GM13977 (cell line): ENCODE measurements at regions of chr11 and their contacts with region 1.

Region 1: GRCh38 chr11:719214-720016 is 13.4 kb downstream of the EPS8L2 start:
- DNase-seq: no peak
- CTCF ChIP-seq: no peak

Region 2: DNA sequence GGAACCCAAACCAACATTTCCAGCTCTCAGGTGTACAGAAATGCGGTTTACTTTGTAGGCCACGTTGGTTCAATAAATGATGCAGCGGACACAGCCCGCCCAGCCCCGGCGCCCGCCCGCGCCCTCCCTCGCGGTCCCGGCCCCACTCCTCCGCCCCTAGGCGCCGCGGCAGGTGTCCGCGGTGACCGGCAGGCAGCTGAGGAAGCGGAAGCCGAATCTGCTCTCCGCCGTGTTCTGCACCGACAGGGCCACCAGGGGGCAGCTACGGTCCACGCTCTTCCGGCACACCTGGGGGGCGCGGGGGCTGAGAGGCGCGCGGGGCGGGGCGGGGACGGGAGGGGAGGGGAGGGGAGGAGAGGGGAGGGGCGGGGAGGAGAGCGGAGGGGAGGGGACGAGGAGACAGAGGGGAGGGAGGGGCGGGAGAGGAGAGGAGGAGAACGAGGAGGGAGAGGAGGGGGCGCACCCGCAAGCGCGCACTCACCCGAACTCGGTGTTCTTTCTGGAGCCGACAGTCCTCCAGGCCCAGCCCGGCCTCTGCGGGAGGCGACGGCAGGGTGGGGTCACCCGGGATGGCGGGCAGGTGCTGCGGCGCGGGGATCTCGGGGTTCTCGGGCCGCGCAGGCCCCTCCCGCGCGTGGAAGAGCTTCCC is 164.5 kb before region 1 on chr11:
- in situ Hi-C with region 1: loop called (anchors 10 kb)
- DNase-seq: peak; percentile 94
- CTCF ChIP-seq: peak; percentile 94

Region 3: DNA sequence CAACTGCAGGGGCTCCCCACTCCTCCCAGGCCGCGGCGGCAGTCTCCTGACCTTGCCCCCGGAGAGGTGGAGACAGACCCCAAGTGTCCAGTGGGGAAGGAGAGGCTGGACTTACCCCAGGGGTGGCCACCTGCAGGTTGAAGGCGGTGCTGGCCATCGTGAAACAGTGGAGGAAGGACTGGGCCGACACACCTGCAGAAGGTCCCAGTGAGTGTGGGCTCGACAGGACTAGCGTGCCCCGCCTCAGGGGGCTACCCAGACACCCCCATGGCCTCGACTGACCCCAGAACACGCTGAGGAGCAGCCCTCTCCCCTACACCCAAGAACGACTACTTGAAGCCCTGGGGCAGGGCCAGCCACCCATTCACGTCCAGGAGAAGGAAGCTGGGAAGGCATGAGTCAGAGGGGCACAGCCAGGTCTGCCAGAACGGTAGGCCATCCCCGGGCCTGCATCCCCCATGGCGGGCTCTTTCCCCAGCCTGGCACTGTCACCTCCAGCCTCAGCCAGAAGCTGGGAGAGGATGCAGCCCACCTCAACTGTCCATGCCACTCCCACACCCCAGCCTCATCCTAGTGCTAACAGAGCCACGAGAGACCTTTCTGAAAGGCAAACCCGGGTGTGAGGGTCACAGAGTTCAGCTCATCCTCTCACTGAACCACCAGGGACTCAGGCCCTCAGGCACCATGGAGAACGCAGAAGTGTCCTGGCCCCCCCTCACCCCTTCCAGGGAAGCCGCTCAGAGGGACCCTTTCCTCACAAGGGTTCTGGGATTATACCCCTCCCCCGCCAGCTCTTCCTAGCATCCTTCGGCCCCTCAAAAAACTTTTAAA is 55.8 kb after region 1 on chr11:
- in situ Hi-C with region 1: no loop called
- DNase-seq: no peak
- CTCF ChIP-seq: no peak

Region 4: DNA sequence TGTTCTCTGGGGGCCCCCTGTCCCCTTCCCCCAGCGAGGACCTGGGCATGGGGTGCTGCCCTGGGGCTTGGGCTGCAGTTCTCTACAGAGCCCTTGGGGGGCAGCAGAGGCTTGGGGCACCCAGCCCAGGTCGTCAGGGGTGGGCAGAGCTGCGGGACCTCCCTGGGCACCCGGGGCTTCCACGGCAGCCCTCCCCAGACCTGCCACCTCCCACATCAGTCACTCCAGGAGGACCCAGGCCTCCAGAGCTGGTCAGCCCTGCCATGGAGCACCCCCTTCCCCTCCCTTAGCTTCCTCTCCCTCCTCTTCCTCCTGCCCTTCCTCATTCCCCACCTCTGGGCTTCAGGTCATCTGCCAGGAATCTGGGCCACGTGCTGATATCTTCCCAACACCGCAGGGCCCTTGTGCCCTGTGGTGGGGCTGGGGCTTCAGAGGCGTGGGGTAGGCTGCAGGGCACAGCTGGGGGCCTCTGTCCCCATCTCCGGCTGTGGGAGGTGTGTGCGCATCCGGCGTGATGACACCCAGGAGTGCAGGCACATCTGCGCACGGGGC is 129.0 kb after region 1 on chr11:
- in situ Hi-C with region 1: no loop called
- DNase-seq: peak; percentile 94
- CTCF ChIP-seq: peak; percentile 96